Caco-2 (cell line): ENCODE measurements at regions of chr13 and their contacts with region 1.

Region 1: DNA sequence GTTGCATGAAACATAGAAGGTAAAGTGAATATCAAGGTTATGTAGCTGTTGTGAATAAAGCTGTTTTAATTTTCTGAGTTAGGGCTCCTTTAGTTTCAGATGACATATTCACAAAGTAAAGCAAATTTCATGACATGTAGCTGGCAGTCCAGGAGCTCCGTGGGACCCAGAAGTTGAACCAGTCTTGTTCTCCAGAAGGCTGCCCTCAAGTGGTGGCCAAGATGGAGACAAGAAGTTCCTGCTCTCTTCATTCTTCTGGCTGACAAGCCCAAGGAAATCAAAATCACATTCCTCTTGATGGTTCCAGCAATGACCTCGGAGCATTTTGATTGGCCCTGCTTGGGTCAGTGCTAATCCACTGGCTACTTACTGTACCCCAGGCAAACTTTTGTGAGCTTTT is 128.7 kb downstream of the LIG4 start:
- DNase-seq: peak; percentile 37 to 54
- H3K4me3 ChIP-seq: no peak overlapping the region
- H3K4me3 Mint-ChIP-seq: no peak overlapping the region
- H3K27ac Mint-ChIP-seq: no peak overlapping the region
- H3K4me1 ChIP-seq: no peaks in the 10 kb centered on the region
- H3K4me1 Mint-ChIP-seq: no peaks in the 10 kb centered on the region
- H3K27me3 ChIP-seq: no peaks in the 10 kb centered on the region
- H3K27me3 Mint-ChIP-seq: no peaks in the 10 kb centered on the region
- CTCF ChIP-seq: peak in 1 of 2 experiments; percentile 34

Region 2: GRCh38 chr13:107373551-107373950 is 713.1 kb before region 1 on chr13:
- CTCF ChIA-PET with region 1: no interaction called
- POLR2A ChIA-PET with region 1: no interaction called
- intact Hi-C with region 1: loop called (anchors 10 kb)
- DNase-seq: peak in 1 of 2 experiments; percentile 11
- H3K4me3 ChIP-seq: no peak overlapping the region
- H3K4me3 Mint-ChIP-seq: no peak overlapping the region
- H3K27ac Mint-ChIP-seq: no peak overlapping the region
- H3K4me1 ChIP-seq: no peaks in the 10 kb centered on the region
- H3K4me1 Mint-ChIP-seq: no peaks in the 10 kb centered on the region
- H3K27me3 ChIP-seq: no peaks in the 10 kb centered on the region
- H3K27me3 Mint-ChIP-seq: peaks cover 14% of the 10 kb centered on the region
- CTCF ChIP-seq: peak; percentile 44 to 74

Region 3: DNA sequence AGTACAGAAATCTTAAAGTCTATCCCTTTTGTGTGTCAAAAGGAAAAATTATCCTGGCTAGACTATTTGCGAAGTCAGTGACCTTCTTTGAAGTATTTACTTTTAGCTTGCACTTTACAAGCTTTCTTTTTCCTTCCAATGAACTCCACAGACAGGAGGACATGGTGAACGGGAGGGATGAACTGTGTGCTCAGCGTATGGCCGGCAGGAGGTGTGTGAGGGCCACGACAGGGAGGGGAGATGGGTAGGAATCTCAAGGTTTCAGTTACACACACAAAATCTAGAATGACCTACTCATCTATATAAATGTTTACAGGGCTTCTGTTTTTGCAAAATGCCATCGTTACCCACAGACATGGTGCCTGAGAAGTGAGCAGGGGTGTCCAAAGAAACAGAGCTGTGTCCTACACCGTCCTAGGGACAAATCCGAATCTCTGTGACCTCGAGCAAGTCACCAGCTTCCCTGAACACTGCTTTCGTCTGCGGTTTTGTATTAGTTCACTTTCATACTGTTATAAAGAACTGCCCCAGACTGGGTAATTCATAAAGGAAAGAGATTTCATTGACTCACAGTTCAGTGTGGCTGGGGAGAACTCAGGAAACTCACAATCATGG is 408.5 kb before region 1 on chr13:
- CTCF ChIA-PET with region 1: no interaction called
- POLR2A ChIA-PET with region 1: no interaction called
- intact Hi-C with region 1: loop called (anchors 10 kb)
- DNase-seq: peak in 1 of 2 experiments; percentile 11
- H3K4me3 ChIP-seq: no peak overlapping the region
- H3K4me3 Mint-ChIP-seq: no peak overlapping the region
- H3K27ac Mint-ChIP-seq: no peak overlapping the region
- H3K4me1 ChIP-seq: no peaks in the 10 kb centered on the region
- H3K4me1 Mint-ChIP-seq: no peaks in the 10 kb centered on the region
- H3K27me3 ChIP-seq: no peaks in the 10 kb centered on the region
- H3K27me3 Mint-ChIP-seq: no peaks in the 10 kb centered on the region
- CTCF ChIP-seq: peak; percentile 18 to 22